PC-3 (cell line): ENCODE measurements at regions of chr12 and their contacts with region 1.

Region 1: GRCh38 chr12:78562368-78563205 is 302.0 kb upstream of the SYT1 start:
- DNase-seq: peak; percentile 44
- ATAC-seq: peak; percentile 55
- H3K4me3 ChIP-seq: no peak overlapping the region
- H3K27ac ChIP-seq: no peak overlapping the region
- H3K4me1 ChIP-seq: no peaks in the 10 kb centered on the region
- H3K27me3 ChIP-seq: no peaks in the 10 kb centered on the region
- CTCF ChIP-seq: peak; percentile 72

Region 2: DNA sequence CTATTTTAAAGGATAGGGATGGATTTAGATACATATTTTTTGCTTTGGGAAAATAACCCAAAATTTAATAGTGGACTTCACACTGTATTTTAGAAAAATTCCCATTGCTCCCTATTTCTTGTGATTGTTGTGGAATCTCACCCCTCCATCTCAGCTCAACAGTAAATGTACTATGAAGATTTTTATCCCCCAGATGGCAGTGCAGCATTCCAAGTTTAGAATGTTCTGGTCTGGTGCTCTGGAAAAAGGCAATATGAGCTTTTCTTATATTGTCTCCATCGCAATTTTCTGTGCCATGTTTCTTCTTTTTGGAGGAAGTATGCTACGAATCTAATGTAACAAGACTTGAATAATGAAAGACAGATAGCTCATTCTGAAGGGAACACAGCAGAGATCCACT is 169.7 kb before region 1 on chr12:
- CTCF ChIA-PET with region 1: interaction called, 5 read pairs
- POLR2A ChIA-PET with region 1: no interaction called
- intact Hi-C with region 1: loop called (anchors 2 kb)
- DNase-seq: peak; percentile 56
- ATAC-seq: peak; percentile 62; the same call in 1 of the 2 replicates
- H3K4me3 ChIP-seq: no peak overlapping the region
- H3K27ac ChIP-seq: no peak overlapping the region
- H3K4me1 ChIP-seq: 0 out of 2 replicates have a peak, but pooled peaks cover under 1% of the 10 kb centered on the region
- H3K27me3 ChIP-seq: no peaks in the 10 kb centered on the region
- CTCF ChIP-seq: peak; percentile 63

Region 3: DNA sequence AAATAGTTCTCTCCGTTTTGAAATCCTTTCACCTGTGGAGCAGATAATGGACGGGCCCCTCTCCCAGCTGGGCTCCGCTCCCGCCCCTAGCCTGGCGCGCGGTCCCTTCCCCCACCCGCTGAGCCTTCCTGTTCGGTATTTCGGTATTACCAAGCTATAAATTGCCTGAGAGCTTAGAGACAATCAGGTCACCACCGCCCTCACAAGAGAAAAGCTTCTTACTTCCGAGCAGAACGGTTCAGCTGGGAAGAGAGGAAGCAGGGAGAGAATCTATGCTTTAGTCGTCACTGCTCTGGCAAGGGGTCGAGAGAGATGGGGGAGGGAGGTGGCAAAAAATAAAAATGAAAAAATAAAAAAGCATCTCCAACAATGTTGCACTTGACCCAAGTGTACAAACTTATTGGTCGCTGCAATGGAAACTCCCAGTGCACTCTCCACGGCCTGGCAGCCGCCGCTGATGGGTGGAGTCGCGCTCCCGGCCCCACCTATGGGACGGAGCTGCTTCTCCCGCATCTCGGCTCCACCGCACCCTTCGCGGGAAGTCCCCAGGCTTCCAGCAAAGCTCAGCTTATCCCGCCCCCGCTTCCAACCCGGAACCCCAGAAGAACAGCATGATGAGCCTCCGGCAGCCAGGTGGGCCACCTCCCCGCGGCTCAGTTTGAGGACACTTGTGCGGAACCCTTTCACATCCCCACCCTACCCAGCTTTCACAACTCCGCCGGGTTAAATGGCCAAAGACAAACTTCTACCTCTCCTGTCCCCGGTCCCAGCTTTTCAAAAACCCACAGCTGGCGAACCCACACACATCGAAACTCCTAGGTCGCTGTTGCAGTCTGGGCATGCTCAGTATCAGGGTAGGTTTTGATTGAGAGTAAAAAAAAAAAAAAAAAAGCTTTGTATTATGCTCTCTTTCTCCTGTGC is 301.2 kb after region 1 on chr12:
- CTCF ChIA-PET with region 1: interaction called, 3 read pairs
- POLR2A ChIA-PET with region 1: no interaction called
- intact Hi-C with region 1: loop called (anchors 10 kb)
- DNase-seq: peak; percentile 53
- ATAC-seq: peak; percentile 73
- H3K4me3 ChIP-seq: peak overlapping the region; percentile 79
- H3K27ac ChIP-seq: no peak overlapping the region
- H3K4me1 ChIP-seq: no peaks in the 10 kb centered on the region
- H3K27me3 ChIP-seq: peaks cover 6% of the 10 kb centered on the region
- CTCF ChIP-seq: no peak

Region 4: GRCh38 chr12:79344855-79345847 is 782.6 kb after region 1 on chr12:
- CTCF ChIA-PET with region 1: no interaction called
- POLR2A ChIA-PET with region 1: no interaction called
- intact Hi-C with region 1: loop called (anchors 10 kb)
- DNase-seq: peak; percentile 77
- ATAC-seq: peak; percentile 99
- H3K4me3 ChIP-seq: no peak overlapping the region
- H3K27ac ChIP-seq: no peak overlapping the region
- H3K4me1 ChIP-seq: no peaks in the 10 kb centered on the region
- H3K27me3 ChIP-seq: peaks cover 4% of the 10 kb centered on the region; the same call in 1 of the 2 replicates
- CTCF ChIP-seq: peak; percentile 91

Region 5: DNA sequence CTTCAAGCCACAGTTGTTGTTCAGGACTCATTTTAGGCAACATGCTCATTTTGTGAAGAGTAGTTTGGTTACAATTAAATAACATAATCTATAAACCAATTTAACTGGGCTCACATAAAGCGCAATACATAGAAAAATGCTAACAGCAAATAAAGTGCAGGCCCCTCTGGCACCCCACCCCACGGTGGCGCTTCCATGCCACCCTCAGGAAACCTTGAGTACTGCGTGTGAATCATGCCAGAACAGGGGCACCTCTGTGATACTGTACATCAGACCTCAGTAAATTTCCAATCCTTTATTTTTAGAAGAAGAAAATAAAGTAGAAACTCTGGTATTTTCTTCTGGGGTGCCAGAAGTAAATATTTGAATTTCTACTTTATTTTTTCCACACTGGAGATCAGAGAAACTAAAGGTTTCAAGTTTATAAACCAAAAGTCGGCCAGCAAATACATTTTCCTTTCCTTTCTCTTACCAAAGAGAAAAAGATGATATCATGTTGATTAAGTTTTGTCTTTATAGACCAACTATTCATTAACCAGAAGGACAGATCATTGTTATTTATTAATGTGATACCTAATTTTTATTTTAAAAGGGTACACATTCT is 811.4 kb after region 1 on chr12:
- CTCF ChIA-PET with region 1: no interaction called
- POLR2A ChIA-PET with region 1: no interaction called
- intact Hi-C with region 1: loop called (anchors 10 kb)
- DNase-seq: peak; percentile 64
- ATAC-seq: peak; percentile 92
- H3K4me3 ChIP-seq: no peak overlapping the region
- H3K27ac ChIP-seq: no peak overlapping the region
- H3K4me1 ChIP-seq: 0 out of 2 replicates have a peak, but pooled peaks cover 3% of the 10 kb centered on the region
- H3K27me3 ChIP-seq: no peaks in the 10 kb centered on the region
- CTCF ChIP-seq: peak; percentile 93